Breast epithelium (tissue), 4 donors: ENCODE measurements at regions of chr4 and their contacts with region 1.

Region 1: DNA sequence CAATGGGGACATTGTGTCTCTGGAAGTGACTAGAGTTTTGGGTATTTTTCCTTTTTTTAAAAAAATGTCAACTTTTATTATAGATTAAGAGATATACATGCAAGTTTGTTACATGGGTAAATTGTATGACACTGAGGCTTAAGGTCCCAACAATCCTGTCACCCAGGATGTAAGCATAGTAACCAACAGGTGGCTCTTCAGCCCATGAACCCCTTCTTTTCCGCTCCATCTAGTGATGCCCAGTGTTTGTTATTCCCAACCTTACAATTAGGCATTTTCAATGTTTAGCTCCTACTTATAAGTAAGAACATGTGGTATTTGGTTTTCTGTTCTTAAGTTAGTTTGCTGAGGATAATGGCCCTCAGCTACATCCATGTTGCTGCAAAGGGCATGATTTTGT is 102.7 kb downstream of the GRID2 start:
- DNase-seq: no peak
- H3K4me3 ChIP-seq: no peak overlapping the region
- H3K27ac ChIP-seq: no peak overlapping the region
- H3K4me1 ChIP-seq: no peaks in the 10 kb centered on the region
- H3K27me3 ChIP-seq: no peaks in the 10 kb centered on the region
- CTCF ChIP-seq: no peak
- POLR2A ChIP-seq: no peak

Region 2: DNA sequence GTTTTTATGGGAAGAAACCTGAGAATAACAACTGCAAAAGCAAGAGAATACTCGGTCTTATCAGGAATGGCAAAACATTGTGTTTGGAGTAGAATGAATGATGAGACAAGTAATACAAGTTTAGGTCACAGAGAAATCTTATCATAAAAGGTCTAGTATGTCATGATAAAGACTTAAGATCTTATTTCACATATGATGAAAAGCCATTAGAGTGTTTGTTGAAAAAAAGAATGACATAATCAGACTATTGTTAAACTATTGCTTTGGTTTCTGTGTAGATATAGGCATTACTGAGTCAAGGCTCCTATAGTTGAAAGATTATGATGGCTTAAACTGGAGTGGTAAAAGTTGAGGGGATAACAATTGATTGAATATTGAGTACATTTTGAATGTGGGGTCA is 1675.7 kb before region 1 on chr4:
- intact Hi-C with region 1: loop called (anchors 5 kb)
- DNase-seq: no peak
- H3K4me3 ChIP-seq: no peak overlapping the region
- H3K27ac ChIP-seq: no peak overlapping the region
- H3K4me1 ChIP-seq: no peaks in the 10 kb centered on the region
- H3K27me3 ChIP-seq: no peaks in the 10 kb centered on the region
- CTCF ChIP-seq: no peak
- POLR2A ChIP-seq: no peak